Panc1 (cell line): ENCODE measurements at regions of chr19 and their contacts with region 1.

Region 1: GRCh38 chr19:5707576-5708575 is 12.1 kb downstream of the LONP1 start:
- DNase-seq: no peak
- ATAC-seq: no peak
- H3K4me3 ChIP-seq: no peak overlapping the region
- H3K27ac ChIP-seq: no peak overlapping the region
- H3K4me1 ChIP-seq: no peaks in the 10 kb centered on the region
- H3K27me3 ChIP-seq: no peaks in the 10 kb centered on the region
- CTCF ChIP-seq: no peak

Region 2: DNA sequence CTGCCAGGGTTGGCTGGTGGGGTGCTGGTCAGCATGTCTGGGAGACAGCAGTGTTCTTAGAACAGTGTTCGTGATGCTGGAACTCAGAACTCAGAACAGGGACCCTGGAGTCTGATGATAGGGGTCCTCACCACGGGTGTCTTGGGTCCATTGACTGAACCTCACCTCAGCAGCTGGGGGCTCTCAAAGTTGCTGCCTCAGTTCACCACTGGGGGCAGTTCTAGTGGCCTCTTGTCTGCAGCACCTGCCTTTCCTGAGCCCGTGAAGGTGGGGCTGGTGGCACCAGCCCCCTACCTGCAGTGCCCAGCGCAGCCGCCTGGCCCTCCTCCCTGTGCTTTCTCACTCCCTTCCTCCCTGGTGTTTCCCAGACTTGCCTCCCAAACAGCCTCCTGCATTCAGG is 56.5 kb before region 1 on chr19:
- CTCF ChIA-PET with region 1: no interaction called
- POLR2A ChIA-PET with region 1: interaction called, 10 read pairs
- in situ Hi-C with region 1: no loop called
- intact Hi-C with region 1: no loop called
- DNase-seq: no peak
- ATAC-seq: no peak
- H3K4me3 ChIP-seq: no peak overlapping the region
- H3K27ac ChIP-seq: no peak overlapping the region
- H3K4me1 ChIP-seq: no peaks in the 10 kb centered on the region
- H3K27me3 ChIP-seq: no peaks in the 10 kb centered on the region
- CTCF ChIP-seq: no peak